ENCODE measurements at regions of chr3 and their contacts with region 1.

Region 1: DNA sequence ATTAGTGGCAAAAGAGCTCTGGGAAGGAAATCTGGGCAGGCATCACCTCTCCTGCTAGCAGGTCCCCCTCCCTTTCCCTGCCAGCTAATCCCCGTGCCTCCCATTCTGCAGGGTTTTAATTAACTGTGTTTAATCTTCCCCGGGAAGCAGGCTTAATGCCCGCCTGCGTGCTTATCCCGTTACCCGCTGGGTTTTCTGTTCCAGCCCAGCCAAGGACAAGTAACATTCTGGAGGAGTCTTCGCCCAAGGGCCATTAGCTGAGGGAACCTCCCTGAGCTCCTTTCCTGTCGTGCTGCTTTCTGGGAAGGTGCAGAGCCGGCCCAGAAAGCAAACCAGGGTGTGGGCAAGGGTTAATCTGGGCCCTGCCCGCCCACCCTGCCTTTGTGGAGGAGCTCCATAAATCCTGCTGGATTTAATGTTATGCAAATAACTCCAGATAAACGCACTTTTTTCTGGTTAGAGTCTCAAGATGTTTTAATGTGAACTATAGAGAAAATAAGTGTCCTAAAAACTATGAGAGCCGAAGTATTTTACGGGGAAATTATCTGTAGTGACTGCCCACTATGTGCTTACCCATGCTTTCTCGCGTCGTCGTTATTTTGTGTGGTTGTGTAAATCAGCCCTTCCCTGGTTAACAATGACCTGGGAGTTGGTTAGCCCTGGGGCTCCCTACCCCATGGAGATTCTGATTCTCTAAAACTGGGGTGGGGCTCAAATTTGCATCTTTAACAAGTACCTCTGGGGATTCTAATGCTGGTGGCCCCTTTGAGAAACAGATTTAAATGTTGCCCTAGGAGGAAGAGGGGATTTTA is 25.9 kb downstream of the TRIM71 start:
- DNase-seq: peak; percentile 65
- ATAC-seq: peak; percentile 39
- H3K4me3 Mint-ChIP-seq: peak overlapping the region; percentile 71
- H3K27ac Mint-ChIP-seq: peak overlapping the region; percentile 98
- H3K4me1 Mint-ChIP-seq: peaks cover 99% of the 10 kb centered on the region
- H3K27me3 Mint-ChIP-seq: no peaks in the 10 kb centered on the region
- CTCF ChIP-seq: no peak

Region 2: GRCh38 chr3:32821686-32822296 is 21.9 kb before region 1 on chr3:
- CTCF ChIA-PET with region 1: interaction called, 4 read pairs
- POLR2A ChIA-PET with region 1: interaction called, 13 read pairs
- DNase-seq: peak; percentile 26
- ATAC-seq: no peak; the same call in 1 of the 2 replicates
- H3K4me3 Mint-ChIP-seq: peak overlapping the region; percentile 100
- H3K27ac Mint-ChIP-seq: peak overlapping the region; percentile 97
- H3K4me1 Mint-ChIP-seq: peaks cover 55% of the 10 kb centered on the region
- H3K27me3 Mint-ChIP-seq: peaks cover 7% of the 10 kb centered on the region; the same call in 1 of the 2 replicates
- CTCF ChIP-seq: no peak